Dorsolateral prefrontal cortex (tissue), 120 donors: ENCODE measurements at regions of chr6 and their contacts with region 1.

Region 1: DNA sequence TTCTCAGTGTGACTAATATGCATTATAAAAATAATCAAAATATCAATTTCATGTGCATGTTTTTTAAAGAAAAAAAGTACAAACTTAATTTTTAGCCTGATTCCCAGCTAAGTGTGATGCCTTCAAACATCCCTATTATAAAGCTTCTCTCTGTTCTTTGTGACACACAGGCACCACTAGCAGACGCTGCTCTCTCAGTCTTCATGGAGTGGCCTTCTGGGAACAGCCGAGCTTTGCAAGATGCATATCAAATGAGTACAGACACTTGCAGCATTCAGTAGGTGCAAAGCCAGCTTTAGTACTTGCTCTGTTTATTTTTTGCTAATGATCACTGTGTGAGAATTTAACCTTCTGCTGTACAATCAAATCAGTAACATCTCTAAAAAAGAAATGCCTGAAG is 340.0 kb downstream of the ADGRB3 start:
- DNase-seq: peak; percentile 34 to 91 (median 76)
- H3K4me3 ChIP-seq: peak overlapping the region in 3 of 59 donors; percentile 13 to 21 (median 19)
- H3K27ac ChIP-seq: peak overlapping the region in 58 of 59 donors; percentile 1 to 90 (median 74)
- H3K27me3 ChIP-seq: no peaks in the 10 kb centered on the region
- CTCF ChIP-seq: peak; percentile 16 to 83 (median 62)

Region 2: DNA sequence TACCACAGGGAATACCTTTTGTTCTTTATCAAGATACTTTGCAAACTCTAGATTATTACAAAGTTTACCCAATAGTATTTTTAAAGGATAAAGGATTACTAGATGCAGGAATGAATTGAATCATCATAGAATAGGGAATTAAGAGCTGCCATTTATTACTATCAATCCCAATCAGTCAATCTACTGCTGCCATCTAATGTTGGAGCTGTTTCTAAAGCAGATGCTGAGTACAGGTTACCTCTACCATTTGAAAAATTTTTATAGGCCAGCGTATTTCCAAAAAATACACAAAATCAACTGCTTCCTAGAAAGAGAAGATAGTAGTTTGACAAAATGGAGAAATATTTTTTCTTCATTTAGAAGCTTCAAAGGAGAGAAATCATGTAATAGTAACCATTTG is 180.4 kb after region 1 on chr6:
- intact Hi-C with region 1: loop called in 1 of 2 experiments (anchors 10 kb)
- DNase-seq: no peak
- H3K4me3 ChIP-seq: no peak overlapping the region
- H3K27ac ChIP-seq: no peak overlapping the region
- H3K27me3 ChIP-seq: no peaks in the 10 kb centered on the region
- CTCF ChIP-seq: peak in 13 of 56 donors; percentile 8 to 40 (median 29)

Region 3: DNA sequence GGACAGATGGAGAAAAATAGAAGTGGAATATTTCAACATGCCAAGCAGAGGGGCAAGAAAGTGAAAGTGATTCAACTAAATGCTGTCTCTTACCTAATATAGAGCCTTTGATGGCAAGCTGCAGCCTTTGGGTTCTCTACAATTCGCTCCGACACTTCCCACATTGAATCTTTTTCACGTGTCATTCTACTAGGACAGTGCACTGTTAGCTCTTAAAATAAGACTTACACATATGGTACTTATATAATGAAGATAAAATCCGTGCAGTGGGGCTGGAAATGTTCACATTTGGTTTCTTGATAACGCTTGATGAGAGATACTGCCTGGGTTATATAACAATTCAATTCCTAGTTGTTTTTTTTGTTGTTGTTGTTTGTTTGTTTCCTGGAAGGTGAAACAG is 319.3 kb after region 1 on chr6:
- intact Hi-C with region 1: no loop called
- DNase-seq: peak in 2 of 10 donors; percentile 30 to 35
- H3K4me3 ChIP-seq: peak overlapping the region in 6 of 59 donors; percentile 0 to 13 (median 6)
- H3K27ac ChIP-seq: peak overlapping the region in 49 of 59 donors; percentile 5 to 87 (median 71)
- H3K27me3 ChIP-seq: no peaks in the 10 kb centered on the region
- CTCF ChIP-seq: no peak